ENCODE measurements at regions of chr3 and their contacts with region 1.

Region 1: DNA sequence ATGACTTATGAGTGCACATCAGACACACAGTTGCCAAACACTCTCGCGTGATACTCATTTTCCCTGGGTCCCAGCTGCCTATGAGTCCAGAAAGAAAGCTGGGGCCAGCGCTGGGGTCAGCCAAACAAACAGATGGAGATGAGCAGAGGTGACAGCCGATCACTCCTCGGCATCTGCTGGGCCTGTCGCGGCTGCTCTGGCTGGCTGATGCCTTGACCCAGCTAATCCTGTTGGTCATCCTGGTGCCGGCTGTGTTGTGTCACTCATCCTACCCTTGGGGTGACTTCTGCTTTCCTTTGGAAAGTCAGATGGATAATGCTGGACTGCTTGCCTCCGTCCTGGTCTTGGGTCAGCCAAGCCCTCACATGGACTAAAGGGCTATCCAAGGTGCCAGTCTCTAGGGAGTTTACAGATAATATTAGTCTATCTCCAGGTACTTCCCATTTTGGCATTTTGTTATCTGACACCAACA is 105.3 kb upstream of the PDZRN3 start:
- DNase-seq: no peak
- ATAC-seq: no peak
- H3K4me3 ChIP-seq: no peak overlapping the region
- H3K27ac ChIP-seq: no peak overlapping the region
- H3K4me1 ChIP-seq: no peaks in the 10 kb centered on the region
- H3K27me3 ChIP-seq: no peaks in the 10 kb centered on the region
- CTCF ChIP-seq: no peak
- POLR2A ChIP-seq: no peak

Region 2: GRCh38 chr3:73188707-73189106 is 541.3 kb before region 1 on chr3:
- intact Hi-C with region 1: no loop called
- DNase-seq: no peak
- ATAC-seq: no peak
- H3K4me3 ChIP-seq: no peak overlapping the region
- H3K27ac ChIP-seq: no peak overlapping the region
- H3K4me1 ChIP-seq: no peaks in the 10 kb centered on the region
- H3K27me3 ChIP-seq: no peaks in the 10 kb centered on the region
- CTCF ChIP-seq: no peak
- POLR2A ChIP-seq: no peak

Region 3: GRCh38 chr3:73614411-73614810 is 115.6 kb before region 1 on chr3:
- intact Hi-C with region 1: no loop called
- DNase-seq: peak in 1 of 3 donors; percentile 63
- ATAC-seq: peak; percentile 74 to 97 (median 86)
- H3K4me3 ChIP-seq: no peak overlapping the region
- H3K27ac ChIP-seq: no peak overlapping the region
- H3K4me1 ChIP-seq: no peaks in the 10 kb centered on the region
- H3K27me3 ChIP-seq: no peaks in the 10 kb centered on the region
- CTCF ChIP-seq: no peak
- POLR2A ChIP-seq: no peak

Region 4: DNA sequence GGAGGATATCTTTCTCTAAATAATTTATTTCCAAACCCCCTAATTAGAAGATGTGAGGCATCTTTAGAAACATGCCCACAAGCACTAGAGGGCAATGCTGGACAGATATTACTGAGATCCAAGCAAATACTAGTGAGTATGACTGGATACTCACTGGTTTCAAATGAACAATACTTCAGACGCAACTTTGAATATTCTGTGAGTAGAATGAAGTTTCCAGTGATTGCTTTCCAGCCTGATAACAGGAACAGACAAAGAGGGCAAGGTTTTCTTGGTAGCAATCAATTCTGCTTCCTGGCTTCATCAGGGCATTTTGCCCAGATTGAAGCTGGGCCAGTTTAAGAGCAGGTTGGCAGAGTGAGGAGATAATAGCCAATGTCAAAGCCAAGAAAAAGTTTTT is 337.3 kb after region 1 on chr3:
- intact Hi-C with region 1: loop called in 1 of 2 experiments (anchors 10 kb)
- DNase-seq: peak; percentile 33 to 82 (median 55)
- ATAC-seq: peak; percentile 79 to 86 (median 82)
- H3K4me3 ChIP-seq: no peak overlapping the region
- H3K27ac ChIP-seq: peak overlapping the region in 2 of 3 donors; percentile 39 to 51
- H3K4me1 ChIP-seq: peaks cover 0 to 18% (median 8%) of the 10 kb centered on the region in 4 donors
- H3K27me3 ChIP-seq: no peaks in the 10 kb centered on the region
- CTCF ChIP-seq: peak in 3 of 4 donors; percentile 24 to 40 (median 26)
- POLR2A ChIP-seq: no peak

Measured in right lobe of liver (tissue), 6 donors.